ENCODE measurements at regions of chr4 and their contacts with region 1.

Region 1: GRCh38 chr4:40065010-40065409 is 8.4 kb downstream of the N4BP2 start:
- DNase-seq: no peak
- H3K4me3 ChIP-seq: no peak overlapping the region
- H3K27ac ChIP-seq: no peak overlapping the region
- H3K4me1 ChIP-seq: no peaks in the 10 kb centered on the region
- H3K27me3 ChIP-seq: no peaks in the 10 kb centered on the region
- CTCF ChIP-seq: no peak

Region 2: GRCh38 chr4:39928538-39928937 is 136.5 kb before region 1 on chr4:
- CTCF ChIA-PET with region 1: no interaction called
- dilution Hi-C with region 1: no loop called
- in situ Hi-C with region 1: no loop called
- intact Hi-C with region 1: no loop called
- DNase-seq: no peak
- H3K4me3 ChIP-seq: no peak overlapping the region
- H3K27ac ChIP-seq: no peak overlapping the region
- H3K4me1 ChIP-seq: peaks cover under 1% of the 10 kb centered on the region
- H3K27me3 ChIP-seq: no peaks in the 10 kb centered on the region
- CTCF ChIP-seq: no peak

Region 3: DNA sequence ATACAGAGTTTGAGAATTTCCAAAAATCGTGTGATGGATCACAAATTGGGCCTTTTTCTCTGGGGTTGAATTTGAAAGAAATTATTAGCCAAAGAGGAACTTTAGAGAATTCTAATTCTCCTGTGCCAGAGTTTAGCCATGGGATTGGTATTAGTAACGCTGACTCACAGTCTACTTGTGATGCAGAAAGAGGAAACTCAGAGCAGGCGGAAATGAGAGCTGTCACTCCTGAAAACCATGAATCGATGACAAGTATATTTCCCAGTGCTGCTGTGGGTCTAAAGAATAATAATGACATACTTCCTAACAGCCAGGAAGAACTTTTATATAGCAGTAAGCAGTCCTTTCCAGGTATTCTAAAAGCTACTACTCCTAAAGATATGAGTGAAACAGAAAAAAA is 56.5 kb after region 1 on chr4:
- CTCF ChIA-PET with region 1: no interaction called
- dilution Hi-C with region 1: loop called (anchors 10 kb)
- in situ Hi-C with region 1: no loop called
- intact Hi-C with region 1: no loop called
- DNase-seq: peak; percentile 70
- H3K4me3 ChIP-seq: no peak overlapping the region
- H3K27ac ChIP-seq: no peak overlapping the region
- H3K4me1 ChIP-seq: no peaks in the 10 kb centered on the region
- H3K27me3 ChIP-seq: no peaks in the 10 kb centered on the region
- CTCF ChIP-seq: no peak